Endothelial cell of umbilical vein (primary cell): ENCODE measurements at regions of chr3 and their contacts with region 1.

Region 1: DNA sequence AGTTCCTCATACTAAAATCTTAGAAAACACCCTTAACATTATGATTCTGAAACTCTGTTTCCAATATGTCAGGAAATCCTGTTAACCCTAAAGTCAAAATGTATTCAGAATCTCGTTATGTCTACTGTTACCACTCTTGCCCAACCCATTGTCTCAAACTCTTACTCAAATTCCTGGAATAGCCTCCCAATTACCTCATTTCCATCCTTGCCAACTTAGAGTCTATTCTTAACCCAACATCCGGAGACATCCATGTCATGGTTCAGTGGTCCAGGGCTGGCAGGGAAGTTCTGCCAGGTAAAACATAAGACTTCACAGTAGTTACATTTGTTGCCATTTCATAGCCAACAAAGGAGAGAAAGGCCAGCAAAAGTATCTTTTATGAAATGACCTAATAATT is 593.9 kb downstream of the PYDC2 start:
- DNase-seq: peak; percentile 85
- H3K4me3 ChIP-seq: peak overlapping the region in 1 of 3 experiments; percentile 9
- H3K27ac ChIP-seq: peak overlapping the region; percentile 85
- H3K4me1 ChIP-seq: peaks cover 27% of the 10 kb centered on the region
- H3K27me3 ChIP-seq: no peaks in the 10 kb centered on the region
- CTCF ChIP-seq: no peak
- POLR2A ChIP-seq: no peak

Region 2: DNA sequence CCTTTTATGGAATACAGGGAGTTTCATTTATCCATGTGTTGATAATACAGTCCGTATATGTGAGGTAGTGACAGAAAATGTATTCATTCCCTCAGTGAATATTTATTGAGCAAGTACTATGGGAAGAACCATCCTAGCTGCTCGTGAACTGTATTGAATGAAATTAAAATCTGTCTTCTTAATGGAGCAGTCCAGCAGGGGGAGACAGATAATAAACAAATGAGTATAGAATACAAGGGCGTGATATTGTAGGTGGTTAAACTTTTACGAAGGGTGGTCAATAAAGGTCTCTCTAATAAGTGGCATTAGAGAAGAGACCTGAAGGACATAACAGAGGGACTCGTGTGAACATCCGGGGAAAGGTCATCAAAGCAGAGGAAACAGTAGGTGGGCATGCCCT is 918.5 kb before region 1 on chr3:
- CTCF ChIA-PET with region 1: no interaction called
- POLR2A ChIA-PET with region 1: no interaction called
- dilution Hi-C with region 1: no loop called
- intact Hi-C with region 1: loop called (anchors 5 kb)
- DNase-seq: peak; percentile 63
- H3K4me3 ChIP-seq: no peak overlapping the region
- H3K27ac ChIP-seq: no peak overlapping the region
- H3K4me1 ChIP-seq: peaks cover 5% of the 10 kb centered on the region
- H3K27me3 ChIP-seq: no peaks in the 10 kb centered on the region
- CTCF ChIP-seq: peak; percentile 30 to 37
- POLR2A ChIP-seq: no peak

Region 3: DNA sequence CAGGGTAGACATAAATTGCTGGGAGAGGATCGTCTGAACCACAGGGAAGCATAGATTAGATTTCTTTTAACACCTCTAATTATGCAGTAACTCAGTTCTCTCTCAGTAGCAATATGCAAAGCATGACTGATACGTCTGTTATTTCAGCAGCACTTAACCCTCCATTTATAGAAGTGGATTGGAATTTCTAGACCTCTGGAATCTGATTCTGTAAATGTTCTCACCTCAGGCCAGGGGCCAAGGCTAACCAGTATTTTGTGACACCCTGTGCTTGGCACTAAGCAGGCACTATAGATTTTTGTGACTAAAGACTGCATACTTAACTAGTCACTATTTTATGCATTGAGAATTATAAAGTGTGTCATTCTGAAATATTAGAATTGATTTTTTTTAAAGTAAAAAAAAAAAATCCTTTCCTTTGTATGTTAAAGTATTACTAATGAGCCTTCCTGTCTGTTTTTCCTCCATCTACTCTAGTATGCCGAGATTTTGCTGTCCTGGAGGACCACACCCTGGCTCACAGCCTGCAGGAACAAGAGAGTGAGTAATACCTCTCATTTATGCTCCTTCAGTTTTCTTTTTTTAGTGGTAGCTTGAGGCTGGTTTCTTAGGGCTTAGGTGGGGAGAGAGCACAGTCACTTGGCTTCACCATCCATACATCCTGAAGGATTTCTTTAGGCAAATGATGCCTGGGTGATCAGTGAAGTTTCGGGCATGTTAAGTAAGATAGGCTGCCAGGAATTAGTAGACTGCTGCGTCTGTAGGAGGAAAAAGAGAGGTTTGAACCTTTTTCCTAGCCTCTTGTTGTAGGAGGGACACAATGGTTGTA is 698.1 kb before region 1 on chr3:
- CTCF ChIA-PET with region 1: no interaction called
- POLR2A ChIA-PET with region 1: no interaction called
- dilution Hi-C with region 1: no loop called
- intact Hi-C with region 1: loop called (anchors 5 kb)
- DNase-seq: peak; percentile 73
- H3K4me3 ChIP-seq: peak overlapping the region in 1 of 3 experiments; percentile 9
- H3K27ac ChIP-seq: peak overlapping the region; percentile 55
- H3K4me1 ChIP-seq: peaks cover 64% of the 10 kb centered on the region
- H3K27me3 ChIP-seq: no peaks in the 10 kb centered on the region
- CTCF ChIP-seq: no peak
- POLR2A ChIP-seq: no peak

Region 4: GRCh38 chr3:192022412-192022811 is 32.5 kb before region 1 on chr3:
- CTCF ChIA-PET with region 1: no interaction called
- POLR2A ChIA-PET with region 1: no interaction called
- dilution Hi-C with region 1: no loop called
- intact Hi-C with region 1: no loop called
- DNase-seq: no peak
- H3K4me3 ChIP-seq: no peak overlapping the region
- H3K27ac ChIP-seq: no peak overlapping the region
- H3K4me1 ChIP-seq: no peaks in the 10 kb centered on the region
- H3K27me3 ChIP-seq: no peaks in the 10 kb centered on the region
- CTCF ChIP-seq: no peak
- POLR2A ChIP-seq: no peak

Region 5: DNA sequence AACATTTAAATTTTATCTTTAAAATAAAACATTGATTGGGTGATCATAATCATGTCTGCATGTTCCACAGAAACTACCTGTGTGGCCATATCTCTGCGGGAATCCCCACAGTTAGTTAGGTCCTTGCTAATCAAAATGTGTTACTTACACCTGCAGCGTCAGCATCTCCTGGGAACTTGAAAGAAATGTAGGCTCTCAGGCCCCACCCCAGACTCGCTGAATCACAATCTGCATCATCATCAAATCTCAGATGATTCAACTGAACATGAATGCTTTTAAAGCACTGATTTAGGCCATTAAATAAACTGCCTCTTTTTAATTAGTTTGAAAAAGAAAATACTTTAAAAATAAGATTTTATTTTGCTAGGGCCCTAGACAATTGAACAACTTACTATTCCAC is 16.2 kb before region 1 on chr3:
- CTCF ChIA-PET with region 1: no interaction called
- POLR2A ChIA-PET with region 1: no interaction called
- dilution Hi-C with region 1: no loop called
- intact Hi-C with region 1: no loop called
- DNase-seq: no peak
- H3K4me3 ChIP-seq: no peak overlapping the region
- H3K27ac ChIP-seq: no peak overlapping the region
- H3K4me1 ChIP-seq: no peaks in the 10 kb centered on the region
- H3K27me3 ChIP-seq: no peaks in the 10 kb centered on the region
- CTCF ChIP-seq: no peak
- POLR2A ChIP-seq: no peak

Region 6: DNA sequence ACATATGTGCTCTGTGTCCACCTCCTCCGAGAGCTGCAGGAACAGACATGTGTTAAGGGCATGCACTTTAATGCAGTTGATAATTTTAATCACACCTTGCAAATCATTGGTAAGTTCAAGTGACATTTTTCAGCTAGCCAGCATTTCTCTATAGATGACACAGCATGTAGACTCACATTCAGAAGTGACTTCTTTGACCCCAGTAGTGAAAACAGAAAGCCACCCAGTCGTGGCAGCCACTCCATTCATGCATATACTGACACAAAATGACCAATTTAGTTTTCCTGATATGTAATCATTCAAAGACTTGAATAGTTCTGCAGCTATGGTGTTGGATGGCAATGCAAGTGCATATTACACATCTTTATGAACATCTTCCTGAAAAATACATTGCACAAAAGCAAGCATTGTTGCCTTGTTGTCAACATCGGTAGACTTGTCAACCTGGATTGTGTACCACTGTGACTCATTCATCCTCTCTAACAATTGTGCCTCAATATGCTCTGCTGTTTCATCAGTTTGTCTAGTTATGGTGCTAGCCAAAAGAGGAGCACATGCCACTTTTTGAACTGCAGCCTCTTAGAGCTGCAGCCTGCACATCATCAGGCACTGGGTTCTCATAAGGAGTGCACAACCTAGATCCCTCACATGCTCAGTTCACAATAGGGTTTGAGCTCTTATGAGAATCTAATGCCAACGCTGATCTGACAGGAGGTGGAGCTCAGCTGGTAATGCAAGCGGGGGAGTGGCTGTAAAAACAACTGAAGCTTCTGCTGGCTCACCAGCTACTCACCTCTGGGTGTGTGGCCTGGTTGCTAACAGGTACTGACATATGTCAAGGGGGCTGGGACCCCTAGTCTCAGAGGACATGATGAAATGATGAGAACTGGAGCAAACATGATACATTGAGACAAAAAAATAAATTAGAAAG is 28.1 kb after region 1 on chr3:
- CTCF ChIA-PET with region 1: no interaction called
- POLR2A ChIA-PET with region 1: no interaction called
- dilution Hi-C with region 1: no loop called
- intact Hi-C with region 1: no loop called
- DNase-seq: no peak
- H3K4me3 ChIP-seq: no peak overlapping the region
- H3K27ac ChIP-seq: no peak overlapping the region
- H3K4me1 ChIP-seq: no peaks in the 10 kb centered on the region
- H3K27me3 ChIP-seq: no peaks in the 10 kb centered on the region
- CTCF ChIP-seq: no peak
- POLR2A ChIP-seq: no peak

Region 7: GRCh38 chr3:192130534-192131132 is 75.8 kb after region 1 on chr3:
- CTCF ChIA-PET with region 1: no interaction called
- POLR2A ChIA-PET with region 1: no interaction called
- dilution Hi-C with region 1: no loop called
- intact Hi-C with region 1: loop called (anchors 2 kb)
- DNase-seq: peak; percentile 61
- H3K4me3 ChIP-seq: no peak overlapping the region
- H3K27ac ChIP-seq: no peak overlapping the region
- H3K4me1 ChIP-seq: no peaks in the 10 kb centered on the region
- H3K27me3 ChIP-seq: no peaks in the 10 kb centered on the region
- CTCF ChIP-seq: peak; percentile 72 to 78
- POLR2A ChIP-seq: no peak

Region 8: DNA sequence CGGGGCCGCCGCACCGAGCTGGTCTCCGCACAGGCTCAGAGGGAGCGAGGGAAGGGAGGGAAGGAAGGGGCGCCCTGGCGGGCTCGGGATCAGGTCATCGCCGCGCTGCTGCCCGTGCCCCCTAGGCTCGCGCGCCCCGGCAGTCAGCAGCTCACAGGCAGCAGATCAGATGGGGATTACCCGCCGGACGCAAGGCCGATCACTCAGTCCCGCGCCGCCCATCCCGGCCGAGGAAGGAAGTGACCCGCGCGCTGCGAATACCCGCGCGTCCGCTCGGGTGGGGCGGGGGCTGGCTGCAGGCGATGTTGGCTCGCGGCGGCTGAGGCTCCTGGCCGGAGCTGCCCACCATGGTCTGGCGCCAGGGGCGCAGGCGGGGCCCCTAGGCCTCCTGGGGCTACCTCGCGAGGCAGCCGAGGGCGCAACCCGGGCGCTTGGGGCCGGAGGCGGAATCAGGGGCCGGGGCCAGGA is 354.5 kb after region 1 on chr3:
- CTCF ChIA-PET with region 1: no interaction called
- POLR2A ChIA-PET with region 1: no interaction called
- dilution Hi-C with region 1: no loop called
- intact Hi-C with region 1: loop called (anchors 2 kb)
- DNase-seq: peak; percentile 57
- H3K4me3 ChIP-seq: peak overlapping the region; percentile 51 to 78 (median 63)
- H3K27ac ChIP-seq: no peak overlapping the region
- H3K4me1 ChIP-seq: peaks cover 20% of the 10 kb centered on the region
- H3K27me3 ChIP-seq: peaks cover 0 to 3% of the 10 kb centered on the region in 2 experiments
- CTCF ChIP-seq: no peak
- POLR2A ChIP-seq: no peak